ENCODE measurements at regions of chr12 and their contacts with region 1.

Region 1: DNA sequence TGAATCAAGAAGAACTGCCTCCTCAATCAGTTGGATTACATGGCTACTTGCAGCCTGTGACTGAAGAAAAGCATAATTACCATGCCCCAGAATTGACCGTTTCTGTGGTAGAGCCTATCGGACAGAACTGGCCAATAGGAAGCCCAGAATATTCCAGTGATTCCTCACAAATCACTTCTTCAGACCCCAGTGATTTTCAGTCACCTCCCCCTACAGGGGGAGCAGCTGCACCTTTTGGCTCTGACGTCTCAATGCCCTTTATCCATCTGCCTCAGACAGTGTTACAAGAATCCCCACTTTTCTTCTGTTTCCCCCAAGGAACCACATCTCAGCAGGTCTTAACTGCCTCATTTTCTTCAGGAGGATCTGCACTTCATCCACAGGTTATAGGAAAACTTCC is 80.8 kb downstream of the RAD52 start:
- DNase-seq: no peak
- ATAC-seq: no peak
- H3K4me3 ChIP-seq: no peak overlapping the region
- H3K27ac ChIP-seq: no peak overlapping the region
- H3K4me1 ChIP-seq: peaks cover 0 to under 1% (median 0%) of the 10 kb centered on the region in 12 donors
- H3K27me3 ChIP-seq: no peaks in the 10 kb centered on the region
- CTCF ChIP-seq: no peak
- POLR2A ChIP-seq: no peak

Region 2: DNA sequence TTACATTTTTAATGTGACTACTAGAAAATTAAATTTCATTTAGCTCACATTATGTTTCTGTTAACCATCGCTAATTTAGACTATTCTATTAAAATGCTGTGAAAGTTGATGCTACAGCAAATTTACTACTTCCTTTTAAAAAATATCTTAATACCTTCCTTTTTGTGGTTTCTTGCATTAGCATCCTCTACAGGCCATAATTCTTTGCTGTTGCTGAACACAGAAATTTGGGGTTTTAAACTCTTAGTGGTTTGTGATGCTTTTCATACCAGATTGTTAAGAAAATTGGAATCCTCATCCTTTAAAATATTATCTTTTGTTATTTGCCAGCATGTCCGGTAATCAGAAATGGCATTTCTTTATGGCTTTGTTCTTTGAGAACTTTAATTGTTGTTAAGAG is 98.2 kb before region 1 on chr12:
- intact Hi-C with region 1: no loop called
- DNase-seq: no peak
- ATAC-seq: no peak
- H3K4me3 ChIP-seq: no peak overlapping the region
- H3K27ac ChIP-seq: no peak overlapping the region
- H3K4me1 ChIP-seq: peaks cover 2 to 86% (median 46%) of the 10 kb centered on the region in 12 donors
- H3K27me3 ChIP-seq: no peaks in the 10 kb centered on the region
- CTCF ChIP-seq: no peak
- POLR2A ChIP-seq: no peak

Region 3: DNA sequence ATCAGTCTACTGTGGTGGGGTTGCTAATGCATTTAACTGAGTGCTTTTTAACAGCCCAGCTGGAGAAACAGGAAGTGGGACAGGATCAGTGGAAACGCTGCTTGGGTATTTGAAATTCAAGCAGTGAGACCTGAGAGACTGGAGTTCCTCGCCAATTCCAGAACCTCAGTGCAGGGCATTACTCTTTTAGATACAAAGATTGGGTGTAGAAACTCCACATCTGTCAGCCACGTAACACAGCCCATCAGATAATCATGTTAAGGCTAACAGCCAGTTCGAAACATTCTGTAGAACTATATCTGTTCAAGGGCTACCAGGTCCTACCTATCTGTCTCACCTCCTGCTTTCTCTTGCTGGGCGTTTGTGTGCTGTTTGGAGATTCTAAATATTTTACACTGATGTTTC is 35.3 kb after region 1 on chr12:
- intact Hi-C with region 1: loop called in 1 of 10 experiments (anchors 5 kb)
- DNase-seq: no peak
- ATAC-seq: no peak
- H3K4me3 ChIP-seq: no peak overlapping the region
- H3K27ac ChIP-seq: no peak overlapping the region
- H3K4me1 ChIP-seq: peaks cover 0 to 28% (median 10%) of the 10 kb centered on the region in 12 donors
- H3K27me3 ChIP-seq: no peaks in the 10 kb centered on the region
- CTCF ChIP-seq: no peak
- POLR2A ChIP-seq: no peak

Region 4: GRCh38 chr12:977156-977555 is 108.4 kb after region 1 on chr12:
- intact Hi-C with region 1: no loop called
- DNase-seq: no peak
- ATAC-seq: no peak
- H3K4me3 ChIP-seq: no peak overlapping the region
- H3K27ac ChIP-seq: no peak overlapping the region
- H3K4me1 ChIP-seq: peaks cover 0 to 3% (median 0%) of the 10 kb centered on the region in 12 donors
- H3K27me3 ChIP-seq: no peaks in the 10 kb centered on the region
- CTCF ChIP-seq: no peak
- POLR2A ChIP-seq: no peak

Measured in heart left ventricle (tissue), 16 donors.